ENCODE measurements at regions of chr1 and their contacts with region 1.

Region 1: GRCh38 chr1:227913764-227914721 is 33.7 kb downstream of the WNT9A start:
- DNase-seq: no peak
- ATAC-seq: no peak
- H3K4me3 ChIP-seq: no peak overlapping the region
- H3K4me3 Mint-ChIP-seq: no peak overlapping the region
- H3K27ac ChIP-seq: no peak overlapping the region
- H3K27ac Mint-ChIP-seq: no peak overlapping the region
- H3K4me1 ChIP-seq: no peaks in the 10 kb centered on the region
- H3K4me1 Mint-ChIP-seq: peaks cover 13% of the 10 kb centered on the region
- H3K27me3 ChIP-seq: no peaks in the 10 kb centered on the region
- H3K27me3 Mint-ChIP-seq: no peaks in the 10 kb centered on the region
- CTCF ChIP-seq: no peak

Region 2: DNA sequence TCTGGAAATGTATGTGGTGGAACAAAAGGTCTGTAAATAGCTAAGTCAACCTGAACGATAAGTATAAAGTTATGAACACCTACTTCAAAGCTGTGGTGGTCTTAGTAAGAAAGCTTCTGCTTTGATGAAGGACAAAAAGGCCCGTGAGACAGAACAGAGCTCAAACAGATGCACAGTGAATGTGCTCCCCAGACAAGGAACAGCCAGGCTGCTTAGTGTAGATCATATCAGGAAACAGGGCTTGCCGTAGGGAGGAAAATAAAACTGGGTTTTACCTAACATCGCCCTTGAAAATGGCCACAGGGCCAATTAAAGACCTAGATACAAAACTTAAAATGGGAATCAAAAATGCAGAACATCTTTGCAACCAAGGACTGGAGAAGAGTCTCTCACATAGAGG is 58.4 kb before region 1 on chr1:
- CTCF ChIA-PET with region 1: no interaction called
- POLR2A ChIA-PET with region 1: no interaction called
- intact Hi-C with region 1: loop called in 1 of 2 experiments (anchors 5 kb)
- DNase-seq: no peak
- ATAC-seq: no peak
- H3K4me3 ChIP-seq: no peak overlapping the region
- H3K4me3 Mint-ChIP-seq: no peak overlapping the region
- H3K27ac ChIP-seq: no peak overlapping the region
- H3K27ac Mint-ChIP-seq: no peak overlapping the region
- H3K4me1 ChIP-seq: no peaks in the 10 kb centered on the region
- H3K4me1 Mint-ChIP-seq: no peaks in the 10 kb centered on the region
- H3K27me3 ChIP-seq: no peaks in the 10 kb centered on the region
- H3K27me3 Mint-ChIP-seq: peaks cover 10% of the 10 kb centered on the region
- CTCF ChIP-seq: no peak

Region 3: GRCh38 chr1:227934476-227935313 is 20.7 kb after region 1 on chr1:
- CTCF ChIA-PET with region 1: no interaction called
- POLR2A ChIA-PET with region 1: no interaction called
- intact Hi-C with region 1: no loop called
- DNase-seq: peak in 5 of 14 experiments; percentile 13 to 56 (median 21)
- ATAC-seq: peak; percentile 72
- H3K4me3 ChIP-seq: no peak overlapping the region
- H3K4me3 Mint-ChIP-seq: no peak overlapping the region
- H3K27ac ChIP-seq: no peak overlapping the region
- H3K27ac Mint-ChIP-seq: no peak overlapping the region
- H3K4me1 ChIP-seq: no peaks in the 10 kb centered on the region
- H3K4me1 Mint-ChIP-seq: peaks cover 9% of the 10 kb centered on the region
- H3K27me3 ChIP-seq: no peaks in the 10 kb centered on the region
- H3K27me3 Mint-ChIP-seq: peaks cover 8% of the 10 kb centered on the region
- CTCF ChIP-seq: no peak

Measured in CD4-positive, alpha-beta T cell (primary cell).